A673 (cell line): ENCODE measurements at regions of chr11 and their contacts with region 1.

Region 1: DNA sequence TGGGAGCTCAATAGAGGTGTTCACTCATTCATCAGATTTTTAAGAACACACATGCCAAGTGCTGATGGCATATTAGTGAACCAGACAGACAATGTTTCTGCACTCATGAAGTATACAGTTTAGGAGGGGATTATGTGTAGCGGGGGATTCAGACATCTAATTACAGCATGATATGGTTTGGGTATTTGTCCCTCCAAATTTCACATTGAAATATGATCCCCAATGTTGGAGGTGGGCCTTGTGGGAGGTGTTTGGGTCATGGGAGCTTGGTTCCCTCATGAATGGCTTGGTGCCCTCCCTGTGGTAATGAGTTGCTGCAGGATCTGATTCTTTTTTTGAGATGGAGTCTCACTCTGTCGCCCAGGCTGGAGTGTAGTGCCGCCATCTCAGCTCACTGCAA is 8.9 kb upstream of the RAB3IL1 start:
- DNase-seq: no peak
- H3K4me3 ChIP-seq: no peak overlapping the region
- H3K27ac ChIP-seq: no peak overlapping the region
- H3K4me1 ChIP-seq: peaks cover 36% of the 10 kb centered on the region
- H3K27me3 ChIP-seq: no peaks in the 10 kb centered on the region
- CTCF ChIP-seq: no peak

Region 2: DNA sequence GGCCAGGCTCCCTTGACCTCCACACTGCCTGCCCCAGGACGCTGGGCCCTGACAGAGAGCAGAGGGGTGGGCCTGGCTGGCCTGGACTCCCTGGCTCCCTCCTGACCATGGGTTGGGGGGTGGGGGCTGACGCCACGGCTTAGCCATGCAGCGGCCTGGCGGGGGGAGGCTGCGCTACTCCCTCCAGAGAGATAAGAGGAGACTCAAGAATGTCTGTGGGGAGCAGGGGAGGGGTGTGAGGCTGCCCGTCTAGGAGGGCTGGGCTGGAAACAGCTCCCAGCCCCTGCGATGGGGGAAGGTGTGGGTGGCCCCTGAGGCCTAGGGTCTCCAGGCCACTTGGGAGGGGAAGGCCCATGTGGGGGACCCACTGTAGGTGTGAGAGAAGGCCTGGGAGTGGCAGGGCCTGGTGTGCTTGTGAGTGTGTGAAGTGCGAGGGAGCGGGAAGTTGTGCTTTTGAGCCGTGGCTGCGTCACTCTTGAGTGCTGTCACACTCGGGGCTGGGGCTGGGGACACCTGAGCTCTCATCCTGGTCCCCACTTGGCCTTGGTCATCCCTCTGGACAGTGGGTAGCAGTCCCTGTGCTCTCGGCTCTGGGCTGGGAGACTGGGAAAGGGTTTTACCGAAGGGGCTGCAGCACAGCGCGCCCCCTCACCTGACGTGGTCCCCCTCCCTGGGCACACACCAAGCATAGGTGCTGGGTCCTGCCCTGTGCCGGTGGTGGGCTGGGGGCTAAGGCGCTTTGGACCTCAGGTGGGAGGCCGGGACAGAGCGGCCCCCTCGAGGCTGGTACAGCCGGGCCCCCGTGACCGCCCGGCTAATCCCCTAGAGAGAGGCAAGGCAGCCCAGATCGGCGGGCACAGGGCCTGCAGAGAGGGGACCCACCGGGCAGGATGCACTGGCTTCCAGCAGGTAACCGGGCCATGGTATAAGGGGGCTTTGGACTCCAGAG is 171.4 kb before region 1 on chr11:
- CTCF ChIA-PET with region 1: no interaction called
- POLR2A ChIA-PET with region 1: interaction called, 14 read pairs
- intact Hi-C with region 1: no loop called
- DNase-seq: no peak
- H3K4me3 ChIP-seq: no peak overlapping the region
- H3K27ac ChIP-seq: no peak overlapping the region
- H3K4me1 ChIP-seq: peaks cover 26% of the 10 kb centered on the region
- H3K27me3 ChIP-seq: no peaks in the 10 kb centered on the region
- CTCF ChIP-seq: no peak